Heart left ventricle (tissue), 16 donors: ENCODE measurements at regions of chr4 and their contacts with region 1.

Region 1: DNA sequence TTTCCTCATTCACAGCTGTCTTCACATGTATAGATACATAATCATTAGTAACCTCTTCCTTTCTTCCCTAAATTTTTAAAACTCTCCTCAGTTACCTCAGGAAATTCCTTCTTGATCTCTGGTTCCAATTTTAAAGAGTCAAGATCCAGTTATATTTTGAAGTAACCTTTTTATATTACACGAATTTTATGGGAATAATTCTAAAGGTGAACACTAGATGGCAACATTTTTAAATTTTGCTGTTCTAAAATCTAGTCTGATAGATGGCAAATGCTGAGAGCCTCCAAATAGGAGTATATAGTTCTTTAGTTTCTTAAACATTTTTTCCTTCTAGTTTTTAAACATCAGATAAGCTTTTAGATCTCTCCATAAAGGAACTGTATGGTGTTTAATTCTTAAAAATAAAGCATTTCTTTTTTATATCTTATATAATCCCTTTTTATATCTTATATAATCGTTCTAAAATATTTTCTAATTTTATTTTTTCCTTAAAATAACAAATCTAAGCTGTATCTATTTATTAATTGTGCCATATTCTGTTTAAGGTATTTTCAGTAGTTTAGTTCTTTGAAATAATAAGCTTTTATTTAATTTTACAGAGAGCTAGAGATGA is 37.9 kb upstream of the PAPSS1 start:
- DNase-seq: no peak
- ATAC-seq: no peak
- H3K4me3 ChIP-seq: no peak overlapping the region
- H3K27ac ChIP-seq: no peak overlapping the region
- H3K4me1 ChIP-seq: peaks cover 0 to 24% (median 0%) of the 10 kb centered on the region in 12 donors
- H3K27me3 ChIP-seq: no peaks in the 10 kb centered on the region
- CTCF ChIP-seq: peak; percentile 34 to 74 (median 59)
- POLR2A ChIP-seq: no peak

Region 2: GRCh38 chr4:107913281-107913899 is 155.4 kb after region 1 on chr4:
- intact Hi-C with region 1: loop called (anchors 1 to 2 kb)
- DNase-seq: peak in 1 of 5 donors; percentile 44
- ATAC-seq: peak in 3 of 4 donors; percentile 73 to 86 (median 77)
- H3K4me3 ChIP-seq: no peak overlapping the region
- H3K27ac ChIP-seq: no peak overlapping the region
- H3K4me1 ChIP-seq: peaks cover 0 to 3% (median 0%) of the 10 kb centered on the region in 12 donors
- H3K27me3 ChIP-seq: no peaks in the 10 kb centered on the region
- CTCF ChIP-seq: peak; percentile 62 to 94 (median 80)
- POLR2A ChIP-seq: no peak